Posterior vena cava (tissue), 2 donors: ENCODE measurements at regions of chr1 and their contacts with region 1.

Region 1: DNA sequence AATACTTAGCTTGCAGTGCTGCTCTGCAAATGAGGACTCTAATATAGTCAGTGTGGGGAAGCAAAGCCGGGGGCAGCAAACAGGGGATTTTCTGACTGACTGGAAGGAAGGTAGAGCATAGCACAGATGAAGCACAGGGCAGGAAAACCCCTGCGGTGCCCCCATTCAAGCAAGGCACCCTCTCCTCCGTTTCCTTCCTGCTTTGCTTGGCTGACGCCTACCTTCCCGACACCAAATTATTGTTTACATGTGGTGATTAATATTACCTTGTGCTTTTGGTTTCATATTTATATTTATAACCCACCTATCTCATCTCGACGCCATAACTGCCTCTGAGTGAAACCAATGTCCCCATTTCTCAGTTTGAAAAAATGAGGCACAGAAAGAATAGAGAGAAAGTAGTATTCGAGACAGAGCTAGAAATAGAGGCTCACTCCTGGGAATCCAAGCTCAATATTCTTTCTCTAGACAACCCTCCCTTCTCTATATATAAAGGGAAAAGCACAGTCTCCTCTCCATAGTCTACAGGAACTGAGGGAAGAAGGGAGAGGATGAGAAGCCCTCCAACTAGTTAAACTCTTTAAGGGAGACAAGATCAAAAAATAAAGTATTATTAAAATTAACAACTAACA is 41.3 kb downstream of the PIK3C2B start:
- DNase-seq: peak; percentile 49

Region 2: DNA sequence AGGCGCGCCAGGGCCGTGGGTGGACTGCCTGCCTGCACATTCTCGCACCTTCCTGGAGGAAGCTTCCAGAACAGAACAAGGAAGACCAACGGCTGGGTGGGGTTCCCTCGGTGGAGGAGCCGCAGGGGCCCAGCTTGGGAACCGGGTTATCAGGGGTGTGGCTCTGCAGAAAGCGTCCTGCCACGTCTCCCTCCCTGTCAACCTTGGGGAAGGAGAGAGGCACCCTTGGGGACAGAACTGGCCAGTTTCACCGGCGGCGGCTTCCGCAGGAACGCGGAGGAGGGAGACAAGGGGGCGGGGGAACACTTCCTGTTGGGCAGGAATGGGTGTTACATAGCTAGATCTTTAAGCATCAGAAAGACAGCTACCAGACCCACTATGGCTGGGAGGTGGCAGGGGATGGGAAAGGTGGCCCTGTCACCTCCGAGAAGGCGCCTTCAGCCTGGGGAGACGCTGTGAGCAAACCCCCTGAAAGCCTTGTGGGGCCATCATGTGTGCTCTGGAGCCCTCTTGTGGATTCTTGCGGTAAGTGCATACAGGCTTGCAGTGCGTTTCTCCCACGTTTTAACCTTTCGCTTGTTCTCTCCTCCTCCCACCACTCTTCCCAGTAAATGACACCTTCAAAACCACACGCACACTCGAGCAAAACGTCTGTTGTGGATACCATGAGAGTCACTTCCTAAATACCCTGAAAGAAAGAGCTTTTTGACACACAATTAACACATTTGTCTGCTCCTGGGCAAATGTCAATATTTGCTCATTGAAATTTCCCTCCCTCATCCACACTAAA is 89.7 kb before region 1 on chr1:
- intact Hi-C with region 1: no loop called
- DNase-seq: peak; percentile 90

Region 3: GRCh38 chr1:204398217-204399081 is 54.8 kb before region 1 on chr1:
- intact Hi-C with region 1: no loop called
- DNase-seq: no peak

Region 4: DNA sequence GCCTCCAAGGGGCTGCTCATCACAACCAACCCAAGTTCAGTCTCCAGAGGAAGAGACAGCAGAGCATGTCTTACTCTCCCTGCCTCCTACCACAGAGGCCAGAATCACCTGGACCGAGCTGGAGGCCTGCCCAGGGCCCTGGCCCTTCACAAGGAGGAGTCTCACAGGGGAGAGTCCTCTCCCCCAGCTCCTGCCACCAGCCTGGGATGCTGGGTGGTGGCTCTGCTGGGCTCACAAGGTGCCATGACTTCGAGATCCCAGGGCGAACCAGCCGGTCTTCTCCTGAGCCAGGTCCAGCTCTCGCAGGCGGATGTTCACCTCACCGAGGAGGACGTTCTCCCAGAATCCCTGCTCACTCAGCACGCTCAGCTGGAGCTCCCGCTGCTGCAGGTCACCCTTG is 28.6 kb before region 1 on chr1:
- intact Hi-C with region 1: loop called in 1 of 2 experiments (anchors 1 kb)
- DNase-seq: no peak

Region 5: DNA sequence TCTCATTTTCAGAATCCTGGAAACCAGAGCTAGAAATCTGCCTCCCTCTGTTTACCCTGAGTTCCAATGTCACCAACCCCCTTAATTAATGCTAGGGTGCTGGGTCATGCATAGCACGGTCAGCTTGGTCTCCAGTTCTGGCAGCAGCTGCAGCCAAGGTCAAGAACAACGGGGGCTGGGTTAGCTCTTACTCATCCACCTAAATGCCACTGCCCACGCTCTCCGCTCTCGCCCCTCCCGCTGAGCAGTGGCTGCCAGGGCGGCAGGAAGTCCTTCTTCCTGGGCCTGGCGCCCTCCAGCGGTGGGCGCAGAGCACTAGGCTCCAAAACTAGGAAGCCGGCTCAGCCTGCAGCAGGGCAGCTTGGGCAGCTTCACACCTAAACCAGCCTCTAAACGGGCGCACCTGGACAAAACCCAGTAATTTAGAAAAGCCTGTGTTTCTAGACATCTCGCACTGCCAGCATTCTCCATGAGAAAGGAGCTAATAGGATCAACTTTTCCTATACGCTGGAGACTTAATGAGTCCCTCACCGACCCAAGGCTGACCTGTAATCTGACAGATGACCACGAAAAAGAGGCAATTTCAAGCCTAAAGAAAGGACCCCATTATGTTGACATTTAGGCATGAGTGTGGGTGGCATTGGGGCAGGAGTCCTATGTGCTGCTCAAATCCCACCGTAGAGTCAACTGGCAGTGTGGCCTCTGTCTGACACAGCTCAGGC is 310.6 kb after region 1 on chr1:
- intact Hi-C with region 1: loop called in 1 of 2 experiments (anchors 10 kb)
- DNase-seq: peak; percentile 94